T-cell (primary cell): ENCODE measurements at regions of chr17 and their contacts with region 1.

Region 1: DNA sequence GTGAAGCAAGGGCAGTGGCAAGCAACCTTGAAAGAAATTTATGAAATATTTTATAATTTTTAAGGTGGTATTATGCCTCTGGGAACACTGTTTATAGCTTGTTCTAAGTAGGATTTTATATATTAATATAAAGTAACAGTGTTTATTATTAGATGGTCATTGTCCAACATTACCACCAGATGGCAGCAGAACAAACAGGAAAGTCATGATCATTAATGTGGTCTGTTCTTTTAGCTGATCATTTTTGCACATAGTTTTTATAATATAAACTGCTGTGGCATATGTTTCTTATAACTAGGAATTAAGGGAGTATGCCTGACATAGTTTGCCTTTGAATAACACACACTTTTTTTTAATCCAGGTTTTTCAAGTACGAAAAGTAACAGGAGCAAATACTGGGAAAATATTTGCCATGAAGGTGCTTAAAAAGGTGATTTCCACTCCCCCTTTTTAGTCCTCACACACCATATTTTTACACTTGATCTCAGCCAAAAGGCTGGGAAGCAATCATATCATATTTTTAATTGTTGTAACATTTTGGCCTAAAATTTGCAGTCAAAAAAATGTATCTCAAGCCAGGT is 21.4 kb downstream of the RPS6KB1 start:
- DNase-seq: peak in 6 of 35 experiments; percentile 6 to 68 (median 12)
- ATAC-seq: peak in 1 of 4 experiments; percentile 47
- H3K4me3 ChIP-seq: no peak overlapping the region
- H3K4me3 Mint-ChIP-seq: no peak overlapping the region
- H3K27ac ChIP-seq: no peak overlapping the region
- H3K27ac Mint-ChIP-seq: no peak overlapping the region
- H3K4me1 ChIP-seq: no peaks in the 10 kb centered on the region
- H3K4me1 Mint-ChIP-seq: peaks cover 0 to 2% (median 2%) of the 10 kb centered on the region in 3 donors
- H3K27me3 ChIP-seq: no peaks in the 10 kb centered on the region
- H3K27me3 Mint-ChIP-seq: no peaks in the 10 kb centered on the region

Region 2: GRCh38 chr17:59964482-59965328 is 50.3 kb after region 1 on chr17 and contains the start of gene RNFT1:
- CTCF ChIA-PET with region 1: interaction called in 1 of 2 experiments, 5 read pairs
- POLR2A ChIA-PET with region 1: interaction called in 1 of 2 experiments, 10 read pairs
- DNase-seq: peak; percentile 78 to 94 (median 86)
- ATAC-seq: peak; percentile 88 to 94 (median 90)
- H3K4me3 ChIP-seq: peak within 1 kb of the TSS; percentile 97 to 98
- H3K4me3 Mint-ChIP-seq: peak within 1 kb of the TSS; percentile 89 to 95 (median 92)
- H3K27ac ChIP-seq: peak within 1 kb of the TSS; percentile 86
- H3K27ac Mint-ChIP-seq: peak within 1 kb of the TSS; percentile 96 to 98
- H3K4me1 ChIP-seq: peaks cover 9 to 12% of the 10 kb centered on the region in 2 experiments
- H3K4me1 Mint-ChIP-seq: peaks cover 23 to 24% (median 24%) of the 10 kb centered on the region in 3 donors
- H3K27me3 ChIP-seq: no peaks in the 10 kb centered on the region
- H3K27me3 Mint-ChIP-seq: no peaks in the 10 kb centered on the region
- total RNA-seq, gene RNFT1: 26.2 to 35.8 (median 32.3) TPM

Region 3: DNA sequence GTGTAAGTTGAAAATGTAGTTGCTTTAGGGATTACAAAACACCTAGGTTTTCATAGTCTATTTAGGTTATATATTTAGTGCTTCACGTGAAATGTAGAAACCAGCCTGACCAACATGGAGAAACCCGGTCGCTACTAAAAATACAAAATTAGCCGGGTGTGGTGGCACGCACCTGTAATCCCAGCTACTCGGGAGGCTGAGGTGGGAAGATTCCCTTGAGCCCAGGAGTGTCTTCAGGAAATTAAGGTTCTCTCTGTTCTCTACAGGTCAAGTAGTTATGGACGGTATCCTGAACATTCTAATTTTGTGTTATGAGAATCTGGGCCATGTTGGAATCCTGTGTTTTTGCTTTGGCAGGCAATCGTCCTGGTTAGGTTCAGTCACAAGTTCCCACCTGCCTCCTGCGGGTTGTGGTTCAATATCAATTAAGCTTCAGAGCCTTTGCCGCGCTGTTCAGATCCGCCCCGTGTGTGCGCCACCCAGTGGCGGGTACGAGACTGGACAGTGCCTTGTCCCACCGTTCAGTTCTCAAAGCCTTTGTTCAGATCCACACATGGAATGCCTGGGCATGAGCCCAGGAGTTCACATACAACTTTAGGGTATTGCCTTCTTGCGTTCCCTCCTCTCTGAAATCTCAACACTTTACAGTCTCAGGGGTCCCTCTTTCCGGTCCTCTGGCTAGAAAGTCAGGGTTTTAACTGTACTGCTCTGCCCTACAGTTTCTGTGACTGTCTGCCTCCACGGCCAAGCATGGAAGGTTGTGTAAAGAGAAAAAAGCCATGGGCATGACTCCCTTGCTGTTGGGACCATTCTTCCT is 122.6 kb after region 1 on chr17:
- CTCF ChIA-PET with region 1: interaction called in 1 of 2 experiments, 28 read pairs
- POLR2A ChIA-PET with region 1: no interaction called
- DNase-seq: peak; percentile 33 to 83 (median 63)
- ATAC-seq: peak; percentile 87 to 98 (median 92)
- H3K4me3 ChIP-seq: no peak overlapping the region
- H3K4me3 Mint-ChIP-seq: no peak overlapping the region
- H3K27ac ChIP-seq: no peak overlapping the region
- H3K27ac Mint-ChIP-seq: peak overlapping the region in 1 of 2 donors; percentile 39
- H3K4me1 ChIP-seq: peaks cover 0 to 5% of the 10 kb centered on the region in 2 experiments
- H3K4me1 Mint-ChIP-seq: peaks cover 4 to 7% (median 4%) of the 10 kb centered on the region in 3 donors
- H3K27me3 ChIP-seq: peaks cover 0 to 14% of the 10 kb centered on the region in 2 experiments
- H3K27me3 Mint-ChIP-seq: peaks cover 9 to 20% of the 10 kb centered on the region in 2 donors